Activated CD8-positive, alpha-beta memory T cell treated with anti-CD3 and anti-CD28 coated beads, Interleukin-2, amount 10 ng/mL, durations not matched to agents 7 days and 5 days (primary cell): ENCODE measurements at regions of chr18 and their contacts with region 1.

Region 1: GRCh38 chr18:63320046-63320689 is 599 bp upstream of the BCL2 start:
- DNase-seq: peak; percentile 92
- ATAC-seq: peak; percentile 80
- H3K4me3 Mint-ChIP-seq: peak overlapping the region; percentile 100
- H3K27ac Mint-ChIP-seq: peak overlapping the region; percentile 81
- H3K4me1 Mint-ChIP-seq: peaks cover 23% of the 10 kb centered on the region
- H3K27me3 Mint-ChIP-seq: no peaks in the 10 kb centered on the region

Region 2: GRCh38 chr18:63119647-63120046 is 200.5 kb before region 1 on chr18:
- CTCF ChIA-PET with region 1: interaction called, 22 read pairs
- DNase-seq: no peak
- ATAC-seq: peak; percentile 45
- H3K4me3 Mint-ChIP-seq: no peak overlapping the region
- H3K27ac Mint-ChIP-seq: no peak overlapping the region
- H3K4me1 Mint-ChIP-seq: no peaks in the 10 kb centered on the region
- H3K27me3 Mint-ChIP-seq: peaks cover 39% of the 10 kb centered on the region

Region 3: GRCh38 chr18:63155169-63155852 is 164.9 kb before region 1 on chr18:
- CTCF ChIA-PET with region 1: interaction called, 50 read pairs
- DNase-seq: peak; percentile 88
- ATAC-seq: peak; percentile 81
- H3K4me3 Mint-ChIP-seq: peak overlapping the region; percentile 76
- H3K27ac Mint-ChIP-seq: peak overlapping the region; percentile 90
- H3K4me1 Mint-ChIP-seq: peaks cover 96% of the 10 kb centered on the region
- H3K27me3 Mint-ChIP-seq: no peaks in the 10 kb centered on the region

Region 4: GRCh38 chr18:63199743-63200241 is 120.4 kb before region 1 on chr18:
- CTCF ChIA-PET with region 1: interaction called, 83 read pairs
- DNase-seq: peak; percentile 79
- ATAC-seq: peak; percentile 85
- H3K4me3 Mint-ChIP-seq: no peak overlapping the region
- H3K27ac Mint-ChIP-seq: no peak overlapping the region
- H3K4me1 Mint-ChIP-seq: peaks cover 41% of the 10 kb centered on the region
- H3K27me3 Mint-ChIP-seq: no peaks in the 10 kb centered on the region

Region 5: GRCh38 chr18:63224630-63225029 is 95.5 kb before region 1 on chr18:
- CTCF ChIA-PET with region 1: interaction called, 16 read pairs
- DNase-seq: peak; percentile 66
- ATAC-seq: peak; percentile 82
- H3K4me3 Mint-ChIP-seq: no peak overlapping the region
- H3K27ac Mint-ChIP-seq: peak overlapping the region; percentile 79
- H3K4me1 Mint-ChIP-seq: peaks cover 84% of the 10 kb centered on the region
- H3K27me3 Mint-ChIP-seq: no peaks in the 10 kb centered on the region

Region 6: GRCh38 chr18:63292831-63293683 is 27.1 kb before region 1 on chr18:
- CTCF ChIA-PET with region 1: interaction called, 13 read pairs
- DNase-seq: peak; percentile 78
- ATAC-seq: peak; percentile 74
- H3K4me3 Mint-ChIP-seq: peak overlapping the region; percentile 25
- H3K27ac Mint-ChIP-seq: peak overlapping the region; percentile 67
- H3K4me1 Mint-ChIP-seq: peaks cover 72% of the 10 kb centered on the region
- H3K27me3 Mint-ChIP-seq: no peaks in the 10 kb centered on the region

Region 7: GRCh38 chr18:63339920-63340484 is 19.8 kb after region 1 on chr18:
- CTCF ChIA-PET with region 1: interaction called, 15 read pairs
- DNase-seq: peak; percentile 51
- ATAC-seq: peak; percentile 39
- H3K4me3 Mint-ChIP-seq: no peak overlapping the region
- H3K27ac Mint-ChIP-seq: peak overlapping the region; percentile 47
- H3K4me1 Mint-ChIP-seq: peaks cover 6% of the 10 kb centered on the region
- H3K27me3 Mint-ChIP-seq: no peaks in the 10 kb centered on the region